PC-3 (cell line): ENCODE measurements at regions of chr7 and their contacts with region 1.

Region 1: DNA sequence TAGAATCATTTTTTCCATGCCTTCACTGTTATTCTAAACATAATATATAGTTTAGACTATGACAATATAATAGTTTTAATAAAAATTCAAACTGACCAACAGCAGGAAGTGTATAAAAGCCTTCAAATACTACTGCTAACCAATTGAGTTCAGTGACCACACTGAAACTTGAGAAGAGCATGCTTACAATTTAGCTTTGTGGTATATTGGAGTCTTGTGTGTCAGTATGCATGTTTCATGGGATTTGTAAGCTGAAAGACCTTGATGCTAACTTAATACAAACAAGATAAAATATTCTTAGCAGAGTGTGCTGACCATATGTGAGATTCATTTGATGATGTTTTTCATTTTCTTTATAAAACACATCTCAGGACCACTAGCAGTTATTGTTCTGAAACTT is 395.5 kb downstream of the SUGCT start:
- DNase-seq: no peak
- ATAC-seq: no peak
- H3K4me3 ChIP-seq: no peak overlapping the region
- H3K27ac ChIP-seq: no peak overlapping the region
- H3K4me1 ChIP-seq: no peaks in the 10 kb centered on the region
- H3K27me3 ChIP-seq: no peaks in the 10 kb centered on the region
- CTCF ChIP-seq: no peak

Region 2: DNA sequence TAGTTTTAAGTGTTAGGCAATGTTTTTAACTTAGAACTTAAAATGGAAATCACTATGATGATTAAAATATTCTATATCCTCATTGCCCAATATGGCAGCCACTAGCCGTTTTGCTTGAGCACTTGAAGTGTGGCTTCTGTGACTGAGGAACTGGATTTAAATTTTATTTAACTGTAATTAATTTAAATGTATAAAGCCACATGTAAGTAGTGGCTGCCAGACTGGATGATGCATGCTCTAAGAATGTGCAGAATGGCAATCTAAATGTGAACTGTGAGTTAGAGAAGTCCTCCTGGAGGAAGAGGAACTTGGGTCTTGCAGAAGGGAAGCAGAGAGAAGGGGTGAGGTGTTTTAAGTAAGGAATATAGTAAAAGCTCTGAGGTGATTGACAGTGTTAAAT is 55.9 kb after region 1 on chr7:
- CTCF ChIA-PET with region 1: no interaction called
- POLR2A ChIA-PET with region 1: no interaction called
- intact Hi-C with region 1: loop called (anchors 10 kb)
- DNase-seq: peak; percentile 50
- ATAC-seq: no peak
- H3K4me3 ChIP-seq: no peak overlapping the region
- H3K27ac ChIP-seq: no peak overlapping the region
- H3K4me1 ChIP-seq: peaks cover 10% of the 10 kb centered on the region
- H3K27me3 ChIP-seq: no peaks in the 10 kb centered on the region
- CTCF ChIP-seq: no peak

Region 3: GRCh38 chr7:40673285-40673684 is 143.0 kb after region 1 on chr7:
- CTCF ChIA-PET with region 1: no interaction called
- POLR2A ChIA-PET with region 1: no interaction called
- intact Hi-C with region 1: loop called (anchors 5 kb)
- DNase-seq: peak; percentile 79
- ATAC-seq: peak; percentile 91
- H3K4me3 ChIP-seq: no peak overlapping the region
- H3K27ac ChIP-seq: peak overlapping the region; percentile 31
- H3K4me1 ChIP-seq: peaks cover 26% of the 10 kb centered on the region
- H3K27me3 ChIP-seq: no peaks in the 10 kb centered on the region
- CTCF ChIP-seq: no peak